CD8-positive, alpha-beta T cell (primary cell): ENCODE measurements at regions of chr18 and their contacts with region 1.

Region 1: DNA sequence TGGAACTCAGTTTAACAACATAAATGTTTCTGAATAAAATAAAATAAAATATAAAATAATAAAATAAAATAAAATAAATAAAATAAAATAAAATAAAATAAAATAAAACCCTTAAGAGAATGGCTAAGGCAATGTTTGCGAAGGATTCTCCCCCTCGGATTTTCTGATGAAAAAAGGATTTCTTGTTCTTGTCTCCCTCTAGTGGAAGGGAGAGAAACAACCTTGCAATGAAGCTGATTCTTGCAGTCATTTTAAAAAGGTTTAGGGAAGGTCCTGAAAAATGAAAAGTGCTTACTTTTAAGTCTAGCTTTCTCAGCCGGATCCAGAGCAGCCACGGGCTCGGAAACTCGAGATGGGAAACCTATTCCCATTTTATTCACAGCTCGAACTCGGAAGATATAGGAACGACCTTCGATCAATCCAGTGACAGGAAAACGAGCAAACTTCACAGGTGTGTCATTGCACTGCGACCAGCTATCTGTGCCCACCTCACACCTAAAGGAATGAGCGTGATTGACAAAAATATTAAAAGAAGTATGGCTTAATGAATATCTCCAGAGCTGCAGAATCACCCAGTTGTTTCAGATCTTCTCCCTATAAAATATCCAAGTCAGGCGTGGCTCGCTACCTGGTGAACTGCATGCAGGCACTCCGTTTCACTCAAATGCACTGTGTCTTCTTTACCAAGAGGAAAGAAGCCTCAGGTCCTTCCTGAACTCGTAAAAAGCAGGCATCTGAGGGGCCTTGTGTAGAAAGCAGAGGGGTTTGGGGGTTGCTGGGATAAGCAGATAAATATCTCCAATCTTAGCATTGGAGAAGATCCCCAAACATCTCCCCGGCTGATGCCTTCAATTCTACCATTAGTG is 68.1 kb downstream of the MYOM1 start:
- DNase-seq: peak in 2 of 9 experiments; percentile 46 to 55
- ATAC-seq: no peak
- H3K4me3 ChIP-seq: no peak overlapping the region
- H3K4me3 Mint-ChIP-seq: no peak overlapping the region
- H3K27ac ChIP-seq: no peak overlapping the region
- H3K27ac Mint-ChIP-seq: no peak overlapping the region
- H3K4me1 ChIP-seq: no peaks in the 10 kb centered on the region
- H3K4me1 Mint-ChIP-seq: peaks cover 4% of the 10 kb centered on the region
- H3K27me3 ChIP-seq: no peaks in the 10 kb centered on the region
- H3K27me3 Mint-ChIP-seq: no peaks in the 10 kb centered on the region
- CTCF ChIP-seq: peak; percentile 93

Region 2: GRCh38 chr18:2932247-2933181 is 219.1 kb before region 1 on chr18:
- CTCF ChIA-PET with region 1: interaction called, 6 read pairs
- POLR2A ChIA-PET with region 1: no interaction called
- intact Hi-C with region 1: loop called (anchors 1 to 2 kb)
- DNase-seq: peak in 6 of 9 experiments; percentile 37 to 82 (median 52)
- ATAC-seq: peak; percentile 79
- H3K4me3 ChIP-seq: no peak overlapping the region
- H3K4me3 Mint-ChIP-seq: no peak overlapping the region
- H3K27ac ChIP-seq: peak overlapping the region in 1 of 2 experiments; percentile 51
- H3K27ac Mint-ChIP-seq: peak overlapping the region; percentile 89
- H3K4me1 ChIP-seq: peaks cover 6% of the 10 kb centered on the region
- H3K4me1 Mint-ChIP-seq: peaks cover 23% of the 10 kb centered on the region
- H3K27me3 ChIP-seq: no peaks in the 10 kb centered on the region
- H3K27me3 Mint-ChIP-seq: no peaks in the 10 kb centered on the region
- CTCF ChIP-seq: peak; percentile 96

Region 3: DNA sequence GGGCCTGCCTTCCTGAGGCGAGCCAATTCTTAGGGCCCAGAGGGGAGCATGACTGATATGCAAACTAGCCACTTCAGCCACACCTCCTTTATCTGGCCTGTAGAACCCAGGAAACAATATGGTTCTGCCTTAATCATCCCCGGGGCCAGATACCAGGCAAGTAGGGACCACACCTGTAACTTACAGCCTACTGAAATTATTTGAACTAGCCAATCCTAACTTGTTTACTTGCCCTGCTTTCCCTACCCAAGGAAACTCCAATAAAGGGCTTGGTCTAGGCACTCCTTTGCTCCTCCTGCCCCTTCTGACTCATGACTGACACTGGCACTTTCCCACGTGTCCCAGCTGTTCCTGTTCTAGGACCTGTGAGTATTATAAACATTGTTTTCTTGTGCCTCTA is 10.5 kb after region 1 on chr18:
- CTCF ChIA-PET with region 1: interaction called, 19 read pairs
- POLR2A ChIA-PET with region 1: interaction called, 4 read pairs
- intact Hi-C with region 1: no loop called
- DNase-seq: no peak
- ATAC-seq: no peak
- H3K4me3 ChIP-seq: no peak overlapping the region
- H3K4me3 Mint-ChIP-seq: no peak overlapping the region
- H3K27ac ChIP-seq: no peak overlapping the region
- H3K27ac Mint-ChIP-seq: no peak overlapping the region
- H3K4me1 ChIP-seq: no peaks in the 10 kb centered on the region
- H3K4me1 Mint-ChIP-seq: no peaks in the 10 kb centered on the region
- H3K27me3 ChIP-seq: no peaks in the 10 kb centered on the region
- H3K27me3 Mint-ChIP-seq: no peaks in the 10 kb centered on the region
- CTCF ChIP-seq: no peak

Region 4: DNA sequence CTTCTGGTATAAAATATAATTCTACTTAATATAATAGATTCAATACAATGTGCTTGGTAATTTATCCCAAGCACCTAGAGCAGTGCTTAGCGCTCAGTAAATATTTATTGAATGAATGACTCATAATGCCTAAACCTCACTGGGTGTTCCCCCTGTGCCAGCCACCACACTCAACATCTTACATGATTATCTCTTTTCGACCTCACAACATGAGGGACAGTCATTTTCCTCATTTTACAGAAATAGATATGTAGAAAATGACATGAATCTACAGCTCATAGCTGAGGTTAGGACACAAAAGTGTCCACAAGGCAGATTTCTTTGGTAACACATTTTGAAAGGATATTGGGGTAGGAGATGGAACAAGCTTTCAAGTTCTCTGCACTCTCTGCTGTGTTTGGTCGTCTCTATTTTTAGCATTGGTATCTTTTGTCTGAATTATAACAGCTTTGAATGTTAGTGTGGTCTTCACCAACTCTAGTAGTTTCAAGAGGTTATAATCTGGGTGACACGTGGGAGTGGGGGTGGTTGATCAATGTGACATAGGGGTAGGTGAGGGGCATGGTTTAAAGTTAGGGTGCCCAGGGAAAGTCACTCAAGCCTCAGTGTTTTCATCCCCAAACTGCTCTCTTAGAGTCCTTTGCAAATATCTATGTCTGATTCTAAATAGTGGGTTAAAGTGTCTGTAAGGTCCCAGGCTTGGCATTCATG is 58.4 kb after region 1 on chr18:
- CTCF ChIA-PET with region 1: interaction called, 4 read pairs
- POLR2A ChIA-PET with region 1: no interaction called
- intact Hi-C with region 1: loop called in 1 of 2 experiments (anchors 5 kb)
- DNase-seq: no peak
- ATAC-seq: peak; percentile 27
- H3K4me3 ChIP-seq: no peak overlapping the region
- H3K4me3 Mint-ChIP-seq: no peak overlapping the region
- H3K27ac ChIP-seq: no peak overlapping the region
- H3K27ac Mint-ChIP-seq: no peak overlapping the region
- H3K4me1 ChIP-seq: peaks cover 13% of the 10 kb centered on the region
- H3K4me1 Mint-ChIP-seq: peaks cover 17% of the 10 kb centered on the region
- H3K27me3 ChIP-seq: no peaks in the 10 kb centered on the region
- H3K27me3 Mint-ChIP-seq: no peaks in the 10 kb centered on the region
- CTCF ChIP-seq: no peak

Region 5: GRCh38 chr18:3245853-3246634 is 94.4 kb after region 1 on chr18:
- CTCF ChIA-PET with region 1: interaction called, 44 read pairs
- POLR2A ChIA-PET with region 1: interaction called, 6 read pairs
- intact Hi-C with region 1: loop called (anchors 1 kb)
- DNase-seq: peak; percentile 44 to 89 (median 78)
- ATAC-seq: peak; percentile 60
- H3K4me3 ChIP-seq: peak overlapping the region; percentile 77 to 90
- H3K4me3 Mint-ChIP-seq: peak overlapping the region; percentile 92
- H3K27ac ChIP-seq: peak overlapping the region; percentile 79 to 89
- H3K27ac Mint-ChIP-seq: peak overlapping the region; percentile 90
- H3K4me1 ChIP-seq: peaks cover 11% of the 10 kb centered on the region
- H3K4me1 Mint-ChIP-seq: peaks cover 39% of the 10 kb centered on the region
- H3K27me3 ChIP-seq: no peaks in the 10 kb centered on the region
- H3K27me3 Mint-ChIP-seq: no peaks in the 10 kb centered on the region
- CTCF ChIP-seq: peak; percentile 84

Region 6: GRCh38 chr18:3903337-3903736 is 751.7 kb after region 1 on chr18:
- CTCF ChIA-PET with region 1: no interaction called
- POLR2A ChIA-PET with region 1: no interaction called
- intact Hi-C with region 1: no loop called
- DNase-seq: no peak
- ATAC-seq: no peak
- H3K4me3 ChIP-seq: no peak overlapping the region
- H3K4me3 Mint-ChIP-seq: no peak overlapping the region
- H3K27ac ChIP-seq: no peak overlapping the region
- H3K27ac Mint-ChIP-seq: no peak overlapping the region
- H3K4me1 ChIP-seq: no peaks in the 10 kb centered on the region
- H3K4me1 Mint-ChIP-seq: no peaks in the 10 kb centered on the region
- H3K27me3 ChIP-seq: no peaks in the 10 kb centered on the region
- H3K27me3 Mint-ChIP-seq: peaks cover 11% of the 10 kb centered on the region
- CTCF ChIP-seq: no peak